Activated CD8-positive, alpha-beta memory T cell treated with anti-CD3 and anti-CD28 coated beads, Interleukin-2, amount 10 ng/mL, durations not matched to agents 7 days and 5 days (primary cell): ENCODE measurements at regions of chr11 and their contacts with region 1.

Region 1: GRCh38 chr11:65615229-65615941 is at the start of gene PCNX3:
- DNase-seq: peak; percentile 100
- ATAC-seq: peak; percentile 86
- H3K4me3 Mint-ChIP-seq: peak within 1 kb of the TSS; percentile 85
- H3K27ac Mint-ChIP-seq: peak within 1 kb of the TSS; percentile 96
- H3K4me1 Mint-ChIP-seq: peaks cover 44% of the 10 kb centered on the region
- H3K27me3 Mint-ChIP-seq: no peaks in the 10 kb centered on the region
- total RNA-seq, gene PCNX3: 54.9 to 57.1 TPM

Region 2: DNA sequence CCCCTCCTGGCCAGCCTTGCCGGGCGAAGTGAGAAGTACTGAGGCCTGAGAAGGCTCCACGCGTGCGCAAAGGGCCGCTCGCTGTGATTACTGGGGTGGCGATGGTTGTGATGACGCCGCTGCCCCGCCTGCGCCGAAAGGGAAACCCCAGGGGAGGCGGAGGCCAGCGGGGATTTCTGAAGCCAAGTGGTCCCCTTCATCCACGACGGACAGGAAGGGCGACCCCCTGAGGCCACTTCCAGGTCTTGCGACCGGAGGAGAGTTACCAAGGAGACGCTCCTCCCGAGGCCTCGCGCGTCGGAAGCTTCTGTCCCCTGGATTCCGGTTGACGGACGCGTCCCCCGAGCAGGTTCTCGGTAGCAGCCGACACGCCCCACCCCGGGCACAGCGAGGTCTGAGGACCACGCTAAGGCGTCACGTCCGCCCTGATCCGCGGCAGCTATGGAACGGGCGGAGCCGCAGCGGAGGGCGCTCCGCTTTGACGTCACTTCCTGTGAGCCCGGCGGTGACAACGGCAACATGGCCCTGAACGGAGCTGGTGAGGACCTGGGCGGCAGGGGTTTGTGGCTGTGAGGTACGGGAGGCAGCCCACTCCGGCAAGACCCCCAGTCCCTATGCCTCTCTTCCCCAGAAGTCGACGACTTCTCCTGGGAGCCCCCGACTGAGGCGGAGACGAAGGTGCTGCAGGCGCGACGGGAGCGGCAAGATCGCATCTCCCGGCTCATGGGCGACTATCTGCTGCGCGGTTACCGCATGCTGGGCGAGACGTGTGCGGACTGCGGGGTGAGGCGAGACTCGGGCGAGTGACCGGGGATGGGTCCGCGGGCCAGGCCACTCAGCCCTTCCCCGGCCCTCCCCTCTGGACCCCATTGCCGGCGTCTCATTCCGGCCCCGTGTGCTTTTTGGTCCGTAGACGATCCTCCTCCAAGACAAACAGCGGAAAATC is 45.1 kb before region 1 on chr11 and contains the start of gene ZNRD2:
- CTCF ChIA-PET with region 1: interaction called, 14 read pairs
- DNase-seq: peak; percentile 100
- ATAC-seq: peak; percentile 74
- H3K4me3 Mint-ChIP-seq: peak within 1 kb of the TSS; percentile 100
- H3K27ac Mint-ChIP-seq: peak within 1 kb of the TSS; percentile 98
- H3K4me1 Mint-ChIP-seq: peaks cover 66% of the 10 kb centered on the region
- H3K27me3 Mint-ChIP-seq: no peaks in the 10 kb centered on the region
- total RNA-seq, gene ZNRD2: 42.1 to 45.5 TPM

Region 3: DNA sequence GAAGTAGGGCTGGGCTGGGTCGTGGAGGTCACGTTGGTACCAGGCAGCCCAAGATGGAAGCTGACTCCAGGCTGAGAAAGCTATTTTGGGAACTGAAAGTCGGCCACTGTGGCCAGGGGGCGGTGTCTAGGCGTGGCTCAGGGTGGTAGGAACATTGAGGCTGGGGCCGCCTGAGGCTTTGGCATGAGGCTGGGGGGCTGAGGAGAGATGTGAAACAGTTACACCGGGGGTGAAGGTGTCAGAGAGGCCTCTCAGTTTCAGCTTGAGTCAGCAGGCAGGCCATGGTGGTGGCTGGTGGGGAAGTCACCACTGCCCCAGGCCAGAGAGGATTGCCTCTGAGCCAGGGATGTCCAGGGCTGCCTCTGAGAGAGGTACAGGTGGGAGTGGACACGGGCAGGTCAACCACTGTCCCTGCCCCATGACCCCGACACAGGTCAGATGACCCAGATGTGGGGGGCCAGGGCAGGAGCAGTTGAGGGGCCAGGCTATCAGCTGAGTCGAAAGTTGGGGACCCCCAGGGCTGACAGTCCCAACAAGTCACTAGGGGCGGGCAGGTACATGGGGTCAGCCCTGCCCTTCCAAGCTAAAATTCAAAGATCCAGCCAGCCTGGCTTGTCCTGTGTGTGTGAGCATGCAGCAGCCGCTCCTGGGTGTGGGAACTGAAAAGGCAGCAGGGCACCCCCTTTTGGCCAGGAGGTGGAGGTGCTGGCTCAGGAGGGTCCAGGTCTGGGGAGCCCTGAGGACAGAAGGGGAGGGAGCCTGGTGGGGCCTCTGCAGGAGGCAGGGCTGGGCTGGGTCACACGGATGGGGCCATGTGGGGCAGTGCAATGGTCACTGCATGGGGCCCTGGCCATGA is 27.0 kb before region 1 on chr11:
- CTCF ChIA-PET with region 1: interaction called, 34 read pairs
- DNase-seq: peak; percentile 93
- ATAC-seq: peak; percentile 85
- H3K4me3 Mint-ChIP-seq: peak overlapping the region; percentile 37
- H3K27ac Mint-ChIP-seq: peak overlapping the region; percentile 96
- H3K4me1 Mint-ChIP-seq: peaks cover 49% of the 10 kb centered on the region
- H3K27me3 Mint-ChIP-seq: no peaks in the 10 kb centered on the region

Region 4: DNA sequence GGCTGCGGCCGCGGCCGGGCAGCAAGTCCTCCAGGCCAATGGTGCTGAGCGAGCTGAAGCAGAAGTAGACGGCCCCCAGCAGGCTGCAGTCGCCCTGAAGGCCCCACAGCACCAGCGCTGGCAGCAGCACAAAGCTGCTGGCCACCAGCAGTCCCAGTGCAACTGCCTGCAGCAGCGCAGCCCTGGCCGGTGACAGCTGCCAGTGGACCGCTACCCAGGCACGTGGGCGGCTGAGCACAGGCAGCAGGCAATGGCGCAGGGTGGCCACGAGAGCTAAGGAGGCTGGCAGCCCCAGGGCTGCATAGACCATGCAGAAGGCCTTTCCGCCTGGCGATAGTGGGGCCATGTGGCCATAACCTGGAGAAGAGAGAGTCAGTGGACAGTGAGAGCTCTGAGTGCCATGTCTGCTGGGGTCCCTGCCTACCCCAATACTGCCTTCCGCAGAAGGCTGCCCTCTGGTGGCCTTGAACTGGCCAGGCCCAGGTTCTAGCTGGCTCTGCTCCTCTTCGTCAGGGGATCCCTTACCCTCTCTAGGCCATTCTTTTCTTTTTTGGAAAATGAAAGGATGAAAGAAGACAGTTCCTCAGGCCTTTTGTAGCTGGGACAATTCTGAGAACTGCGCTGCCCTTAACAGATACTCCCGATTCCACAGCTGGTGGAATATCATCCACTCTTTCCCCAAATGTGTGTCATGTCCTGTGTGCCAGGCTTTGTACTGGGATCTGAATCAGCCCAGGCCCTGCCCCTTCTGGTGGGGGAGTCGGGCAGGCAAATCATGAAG is 21.7 kb before region 1 on chr11:
- CTCF ChIA-PET with region 1: interaction called, 34 read pairs
- DNase-seq: peak; percentile 63
- ATAC-seq: peak; percentile 61
- H3K4me3 Mint-ChIP-seq: no peak overlapping the region
- H3K27ac Mint-ChIP-seq: peak overlapping the region; percentile 49
- H3K4me1 Mint-ChIP-seq: peaks cover 25% of the 10 kb centered on the region
- H3K27me3 Mint-ChIP-seq: no peaks in the 10 kb centered on the region

Region 5: DNA sequence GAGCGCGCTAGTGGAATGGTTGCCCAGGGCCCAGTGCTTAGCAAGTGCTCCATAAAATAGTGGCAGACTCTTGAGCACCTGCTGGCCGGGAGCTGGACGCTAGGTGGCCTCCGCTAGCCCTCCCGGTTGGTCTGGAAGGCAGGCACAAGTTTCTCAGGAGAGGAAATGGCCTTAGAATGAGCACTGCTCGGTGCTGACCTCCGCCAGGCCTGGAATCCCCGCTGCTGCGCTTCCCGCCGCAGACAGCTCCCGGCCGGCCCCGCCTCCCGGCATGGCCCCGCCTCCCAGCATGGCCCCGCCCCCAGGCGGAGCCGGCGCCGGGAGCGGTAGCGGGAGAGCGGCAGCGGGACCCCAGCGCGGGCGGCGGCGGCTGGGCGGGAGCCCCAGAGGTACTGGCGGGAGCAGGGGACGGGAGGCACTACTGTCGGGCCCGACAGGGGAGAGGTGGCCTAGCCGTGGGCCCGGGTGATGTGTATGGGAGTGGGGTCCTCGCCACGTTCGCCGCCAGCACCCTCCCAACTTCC is 22.5 kb after region 1 on chr11 and contains the start of gene SIPA1:
- CTCF ChIA-PET with region 1: interaction called, 16 read pairs
- DNase-seq: peak; percentile 76
- ATAC-seq: peak; percentile 64
- H3K4me3 Mint-ChIP-seq: peak within 1 kb of the TSS; percentile 81
- H3K27ac Mint-ChIP-seq: peak within 1 kb of the TSS; percentile 95
- H3K4me1 Mint-ChIP-seq: peaks cover 59% of the 10 kb centered on the region
- H3K27me3 Mint-ChIP-seq: no peaks in the 10 kb centered on the region
- total RNA-seq, gene SIPA1: 188 to 267 TPM

Region 6: DNA sequence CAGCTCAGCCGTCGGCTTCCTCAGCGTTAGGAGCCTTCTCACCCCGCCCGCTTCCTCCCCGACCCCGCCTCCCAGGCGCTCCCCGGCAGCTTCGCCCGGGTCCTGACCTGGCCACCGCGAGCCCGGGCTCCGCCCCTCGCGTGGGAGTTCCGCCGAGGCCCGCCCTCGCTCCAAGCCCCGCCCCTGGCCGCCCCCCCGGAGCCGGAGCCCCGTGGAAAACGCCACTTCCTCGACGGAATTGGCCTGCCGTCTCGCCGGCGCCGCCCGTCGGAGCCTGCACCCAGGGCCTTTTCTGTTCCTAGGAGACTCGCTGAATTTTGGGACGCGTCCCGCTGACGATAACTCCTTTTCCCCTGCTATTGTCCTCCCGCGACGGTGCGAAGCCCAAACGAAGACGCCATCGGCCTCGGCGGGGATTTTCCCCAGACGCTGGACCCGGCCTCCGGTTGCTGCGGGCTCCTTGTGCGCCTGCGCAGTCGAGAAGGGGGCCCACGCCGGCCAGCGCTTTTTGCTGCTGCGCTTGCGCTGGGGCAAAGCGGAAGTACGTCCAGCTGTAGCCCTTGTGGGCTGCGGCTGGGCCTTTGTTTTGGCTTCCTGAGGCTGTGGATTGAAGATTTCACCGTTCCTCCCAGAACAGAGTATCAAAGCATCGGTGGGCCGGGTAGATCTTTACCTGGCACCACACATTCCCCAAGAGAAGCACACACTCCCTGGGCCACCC is 37.3 kb after region 1 on chr11:
- CTCF ChIA-PET with region 1: interaction called, 10 read pairs
- DNase-seq: peak; percentile 97
- ATAC-seq: peak; percentile 90
- H3K4me3 Mint-ChIP-seq: peak overlapping the region; percentile 81
- H3K27ac Mint-ChIP-seq: peak overlapping the region; percentile 94
- H3K4me1 Mint-ChIP-seq: peaks cover 35% of the 10 kb centered on the region
- H3K27me3 Mint-ChIP-seq: no peaks in the 10 kb centered on the region

Region 7: GRCh38 chr11:65680192-65680743 is 64.9 kb after region 1 on chr11:
- CTCF ChIA-PET with region 1: no interaction called
- DNase-seq: no peak
- ATAC-seq: no peak
- H3K4me3 Mint-ChIP-seq: no peak overlapping the region
- H3K27ac Mint-ChIP-seq: no peak overlapping the region
- H3K4me1 Mint-ChIP-seq: peaks cover 6% of the 10 kb centered on the region
- H3K27me3 Mint-ChIP-seq: peaks cover 18% of the 10 kb centered on the region

Region 8: DNA sequence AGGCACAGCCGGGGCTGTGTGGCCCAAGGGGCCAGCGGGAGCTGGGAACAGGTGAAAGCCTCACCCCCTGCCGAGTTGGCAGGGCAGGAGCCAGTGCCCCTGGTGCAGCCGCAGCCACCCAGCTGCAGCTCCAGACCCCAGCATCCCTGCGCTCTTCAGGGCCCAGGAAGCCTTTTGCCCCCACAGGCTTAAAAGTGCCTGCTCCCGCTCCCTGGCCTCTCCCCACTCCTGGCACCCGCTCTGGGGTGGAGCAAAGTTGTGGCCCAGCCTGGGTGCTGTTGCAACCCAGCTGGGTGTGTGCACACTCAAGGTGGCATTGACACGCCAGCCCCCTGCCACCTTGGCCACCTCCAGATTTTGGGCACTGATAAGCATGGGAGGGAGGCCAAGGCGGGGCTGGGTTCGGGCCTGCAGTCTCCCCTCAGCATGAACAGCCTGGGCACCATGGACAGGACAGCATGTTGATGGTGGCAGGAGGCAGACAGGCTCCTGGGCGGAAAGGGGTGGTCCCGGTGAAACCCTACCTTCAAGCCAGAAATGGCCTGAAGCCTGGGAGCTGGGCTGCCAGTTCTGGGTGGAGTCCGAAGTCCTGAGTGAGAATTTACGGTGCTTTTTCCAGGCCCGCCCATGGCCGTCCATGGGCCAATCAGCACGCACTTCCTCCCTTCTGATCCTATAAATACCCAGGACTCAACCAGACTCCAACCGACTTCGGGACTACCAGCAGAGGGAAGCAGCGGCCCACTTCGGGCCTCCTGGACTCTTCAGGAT is 128.7 kb after region 1 on chr11:
- CTCF ChIA-PET with region 1: no interaction called
- DNase-seq: no peak
- ATAC-seq: no peak
- H3K4me3 Mint-ChIP-seq: no peak overlapping the region
- H3K27ac Mint-ChIP-seq: no peak overlapping the region
- H3K4me1 Mint-ChIP-seq: no peaks in the 10 kb centered on the region
- H3K27me3 Mint-ChIP-seq: peaks cover 40% of the 10 kb centered on the region